ENCODE measurements at regions of chr3 and their contacts with region 1.

Region 1: GRCh38 chr3:167684388-167684993 is 30.7 kb upstream of the WDR49 start:
- DNase-seq: peak; percentile 78
- H3K4me3 ChIP-seq: no peak overlapping the region
- H3K27ac ChIP-seq: no peak overlapping the region
- H3K4me1 ChIP-seq: no peaks in the 10 kb centered on the region
- CTCF ChIP-seq: peak; percentile 98

Region 2: DNA sequence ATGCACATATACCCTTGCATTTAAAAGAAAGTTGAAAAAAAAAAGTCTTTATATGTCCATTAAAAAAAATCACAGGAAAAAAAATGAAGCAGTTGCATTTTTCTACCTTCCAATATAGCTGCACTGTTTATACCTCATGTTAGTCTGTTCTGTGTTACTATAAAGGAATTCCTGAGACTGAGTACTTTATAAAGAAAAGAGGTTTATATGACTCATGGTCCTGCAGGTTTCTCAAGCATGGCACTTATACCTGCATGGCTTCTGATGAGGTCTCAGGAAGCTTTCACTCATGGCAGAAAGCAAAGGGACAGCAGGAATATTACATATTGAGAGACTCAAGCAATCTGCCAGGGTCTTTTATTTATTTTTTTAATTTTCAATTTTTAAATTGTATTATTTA is 1570.0 kb before region 1 on chr3:
- CTCF ChIA-PET with region 1: no interaction called
- POLR2A ChIA-PET with region 1: no interaction called
- intact Hi-C with region 1: no loop called
- DNase-seq: no peak
- H3K4me3 ChIP-seq: no peak overlapping the region
- H3K27ac ChIP-seq: no peak overlapping the region
- H3K4me1 ChIP-seq: no peaks in the 10 kb centered on the region
- CTCF ChIP-seq: no peak

Region 3: DNA sequence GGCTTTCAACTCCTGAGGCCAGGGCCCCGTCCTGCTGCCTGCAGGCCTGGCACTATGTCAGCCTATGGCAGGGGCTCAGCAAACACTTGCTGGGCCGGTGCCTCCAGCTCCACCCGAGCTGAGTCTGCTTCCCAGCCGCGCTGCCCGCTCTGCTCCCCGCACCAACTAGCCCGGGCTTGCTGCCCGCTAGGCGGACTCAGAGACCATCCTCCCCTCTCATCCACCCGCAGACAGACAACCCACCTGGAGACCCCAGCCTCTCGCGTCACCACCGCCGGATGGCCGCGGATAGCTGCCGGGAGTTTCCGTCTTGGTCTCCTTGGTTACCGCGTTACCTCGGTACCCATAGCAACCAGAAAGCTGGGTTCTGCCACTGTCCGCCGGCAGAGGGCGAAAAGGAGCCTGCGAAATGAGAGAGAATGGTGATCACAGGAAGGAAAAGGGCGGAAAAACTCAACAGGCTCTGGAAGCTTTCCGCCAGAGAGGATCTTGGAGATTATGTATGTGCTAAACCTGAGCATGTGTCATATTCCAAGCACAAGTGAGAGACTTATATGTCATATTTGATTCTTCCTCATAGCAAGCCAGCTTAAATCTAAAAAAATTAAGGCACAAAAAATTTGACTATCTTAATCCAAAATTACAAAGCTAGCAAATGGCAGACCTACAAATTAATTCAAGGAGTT is 304.3 kb before region 1 on chr3 and contains the start of gene ZBBX:
- CTCF ChIA-PET with region 1: no interaction called
- POLR2A ChIA-PET with region 1: no interaction called
- intact Hi-C with region 1: loop called (anchors 10 kb)
- DNase-seq: peak; percentile 87
- H3K4me3 ChIP-seq: peak within 1 kb of the TSS; percentile 63
- H3K27ac ChIP-seq: no peak within 1 kb of the TSS
- H3K4me1 ChIP-seq: no peaks in the 10 kb centered on the region
- CTCF ChIP-seq: peak; percentile 95
- total RNA-seq, gene ZBBX: not detected in 2 replicates

Region 4: DNA sequence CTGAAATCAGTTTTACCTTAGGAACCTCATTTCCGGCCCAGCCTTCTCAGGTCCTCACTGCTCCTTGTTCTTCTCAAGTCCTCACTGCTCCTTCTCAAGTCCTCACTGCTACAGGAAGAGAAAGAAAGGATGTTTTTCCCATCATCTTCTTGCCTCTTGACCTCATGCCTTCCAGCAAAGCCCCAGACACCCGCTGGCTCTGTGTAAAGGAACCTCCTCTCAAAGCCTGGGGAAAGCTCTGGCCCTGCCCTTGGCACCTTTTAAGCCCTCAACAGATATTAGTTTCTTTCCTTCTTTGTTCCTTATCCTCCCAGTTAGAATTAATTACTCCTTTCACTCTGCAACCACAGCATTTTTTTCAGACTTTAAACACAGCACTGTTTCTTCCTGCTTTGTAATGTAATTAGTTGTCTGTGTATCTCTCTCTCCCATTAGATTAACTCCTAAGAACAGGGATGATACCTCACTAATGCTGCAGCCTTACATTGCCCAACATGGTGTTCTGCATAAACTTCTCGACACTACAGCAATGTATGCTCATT is 26.7 kb before region 1 on chr3:
- CTCF ChIA-PET with region 1: no interaction called
- POLR2A ChIA-PET with region 1: no interaction called
- intact Hi-C with region 1: no loop called
- DNase-seq: no peak
- H3K4me3 ChIP-seq: no peak overlapping the region
- H3K27ac ChIP-seq: no peak overlapping the region
- H3K4me1 ChIP-seq: peaks cover 10% of the 10 kb centered on the region
- CTCF ChIP-seq: no peak